Aorta (tissue), 5 donors: ENCODE measurements at regions of chr20 and their contacts with region 1.

Region 1: GRCh38 chr20:55449091-55449794 is 556.1 kb downstream of the CBLN4 start:
- DNase-seq: no peak
- ATAC-seq: no peak
- H3K4me3 ChIP-seq: no peak overlapping the region
- H3K27ac ChIP-seq: peak overlapping the region; percentile 40 to 49
- H3K4me1 ChIP-seq: peaks cover 0 to 2% of the 10 kb centered on the region in 2 donors
- H3K27me3 ChIP-seq: no peaks in the 10 kb centered on the region

Region 2: DNA sequence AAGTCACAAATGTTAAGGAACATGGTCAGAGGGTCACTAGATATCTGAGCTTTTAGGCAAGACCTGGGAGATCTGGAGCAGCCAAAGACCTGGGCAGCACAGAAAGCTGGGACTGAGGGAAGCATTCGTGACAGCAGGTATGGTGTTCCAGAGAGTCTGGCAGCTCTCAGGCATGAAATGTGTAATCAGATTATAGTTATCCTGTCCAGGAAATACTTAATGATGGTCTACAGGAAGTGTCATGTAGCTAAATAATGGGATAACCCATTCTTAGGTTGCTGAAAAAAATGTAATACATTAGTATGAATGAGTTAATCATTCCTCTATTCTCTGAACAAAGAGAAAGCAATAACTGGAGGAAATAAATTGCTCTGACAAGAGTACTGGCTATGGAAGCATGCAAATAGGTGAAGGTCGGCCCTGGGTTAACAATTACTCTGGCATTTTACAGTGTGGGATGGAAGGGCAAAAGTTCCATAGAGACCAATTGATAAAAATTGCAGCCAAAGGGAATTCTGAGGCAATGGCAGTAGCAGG is 184.5 kb before region 1 on chr20:
- intact Hi-C with region 1: no loop called
- DNase-seq: no peak
- ATAC-seq: no peak
- H3K4me3 ChIP-seq: no peak overlapping the region
- H3K27ac ChIP-seq: no peak overlapping the region
- H3K4me1 ChIP-seq: no peaks in the 10 kb centered on the region
- H3K27me3 ChIP-seq: no peaks in the 10 kb centered on the region

Region 3: GRCh38 chr20:55394592-55394991 is 54.7 kb before region 1 on chr20:
- intact Hi-C with region 1: no loop called
- DNase-seq: no peak
- ATAC-seq: no peak
- H3K4me3 ChIP-seq: no peak overlapping the region
- H3K27ac ChIP-seq: no peak overlapping the region
- H3K4me1 ChIP-seq: no peaks in the 10 kb centered on the region
- H3K27me3 ChIP-seq: no peaks in the 10 kb centered on the region

Region 4: GRCh38 chr20:55604365-55604764 is 155.1 kb after region 1 on chr20:
- intact Hi-C with region 1: loop called in 1 of 2 experiments (anchors 10 kb)
- DNase-seq: no peak
- ATAC-seq: no peak
- H3K4me3 ChIP-seq: no peak overlapping the region
- H3K27ac ChIP-seq: no peak overlapping the region
- H3K4me1 ChIP-seq: no peaks in the 10 kb centered on the region
- H3K27me3 ChIP-seq: no peaks in the 10 kb centered on the region